Activated naive CD4-positive, alpha-beta T cell treated with anti-CD3 and anti-CD28 coated beads for 36 hours (primary cell): ENCODE measurements at regions of chr12 and their contacts with region 1.

Region 1: GRCh38 chr12:50111693-50112455 is at the start of gene COX14:
- DNase-seq: peak; percentile 100
- H3K4me3 Mint-ChIP-seq: peak within 1 kb of the TSS; percentile 89
- H3K27ac Mint-ChIP-seq: peak within 1 kb of the TSS; percentile 91
- H3K4me1 Mint-ChIP-seq: peaks cover 36% of the 10 kb centered on the region
- H3K27me3 Mint-ChIP-seq: no peaks in the 10 kb centered on the region
- total RNA-seq, gene COX14: 47.5 to 48.3 TPM

Region 2: GRCh38 chr12:49983892-49984291 is 128.0 kb before region 1 on chr12:
- CTCF ChIA-PET with region 1: no interaction called
- intact Hi-C with region 1: no loop called
- DNase-seq: no peak
- H3K4me3 Mint-ChIP-seq: no peak overlapping the region
- H3K27ac Mint-ChIP-seq: no peak overlapping the region
- H3K4me1 Mint-ChIP-seq: peaks cover 1% of the 10 kb centered on the region
- H3K27me3 Mint-ChIP-seq: no peaks in the 10 kb centered on the region

Region 3: GRCh38 chr12:50055831-50056638 is 55.8 kb before region 1 on chr12:
- CTCF ChIA-PET with region 1: interaction called, 10 read pairs
- intact Hi-C with region 1: no loop called
- DNase-seq: peak; percentile 70
- H3K4me3 Mint-ChIP-seq: peak overlapping the region; percentile 39
- H3K27ac Mint-ChIP-seq: no peak overlapping the region
- H3K4me1 Mint-ChIP-seq: peaks cover 33% of the 10 kb centered on the region
- H3K27me3 Mint-ChIP-seq: peaks cover 41% of the 10 kb centered on the region

Region 4: GRCh38 chr12:50097952-50098351 is 13.9 kb before region 1 on chr12:
- CTCF ChIA-PET with region 1: interaction called, 24 read pairs
- intact Hi-C with region 1: no loop called
- DNase-seq: no peak
- H3K4me3 Mint-ChIP-seq: no peak overlapping the region
- H3K27ac Mint-ChIP-seq: no peak overlapping the region
- H3K4me1 Mint-ChIP-seq: no peaks in the 10 kb centered on the region
- H3K27me3 Mint-ChIP-seq: no peaks in the 10 kb centered on the region

Region 5: DNA sequence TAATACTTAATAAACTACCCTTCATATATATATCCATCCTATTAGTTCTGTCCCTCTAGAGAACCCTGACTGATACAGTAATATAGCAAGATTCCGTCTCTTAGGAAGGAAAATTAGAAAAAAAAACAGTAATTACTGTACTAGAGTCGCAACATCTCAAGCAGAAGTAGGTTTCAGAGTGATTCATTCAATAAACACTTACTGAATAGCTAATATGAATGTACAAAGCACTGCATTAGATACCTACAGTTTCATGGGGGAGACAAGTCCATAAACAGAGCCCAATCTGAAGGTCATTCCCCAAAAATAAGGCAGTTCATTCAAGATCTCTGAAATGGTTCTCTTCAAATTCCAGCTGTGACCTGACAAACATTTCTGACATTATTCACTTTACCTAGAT is 45.4 kb after region 1 on chr12:
- CTCF ChIA-PET with region 1: interaction called, 13 read pairs
- intact Hi-C with region 1: no loop called
- DNase-seq: no peak
- H3K4me3 Mint-ChIP-seq: no peak overlapping the region
- H3K27ac Mint-ChIP-seq: no peak overlapping the region
- H3K4me1 Mint-ChIP-seq: peaks cover 26% of the 10 kb centered on the region
- H3K27me3 Mint-ChIP-seq: no peaks in the 10 kb centered on the region

Region 6: GRCh38 chr12:50222275-50222795 is 110.5 kb after region 1 on chr12:
- CTCF ChIA-PET with region 1: interaction called, 3 read pairs
- intact Hi-C with region 1: loop called (anchors 2 kb)
- DNase-seq: peak; percentile 32
- H3K4me3 Mint-ChIP-seq: no peak overlapping the region
- H3K27ac Mint-ChIP-seq: no peak overlapping the region
- H3K4me1 Mint-ChIP-seq: peaks cover 36% of the 10 kb centered on the region
- H3K27me3 Mint-ChIP-seq: no peaks in the 10 kb centered on the region

Region 7: GRCh38 chr12:50763639-50764285 is 651.9 kb after region 1 on chr12 and contains the start of gene ATF1:
- CTCF ChIA-PET with region 1: interaction called, 3 read pairs
- intact Hi-C with region 1: loop called (anchors 2 kb)
- DNase-seq: peak; percentile 91
- H3K4me3 Mint-ChIP-seq: peak within 1 kb of the TSS; percentile 83
- H3K27ac Mint-ChIP-seq: peak within 1 kb of the TSS; percentile 94
- H3K4me1 Mint-ChIP-seq: peaks cover 33% of the 10 kb centered on the region
- H3K27me3 Mint-ChIP-seq: no peaks in the 10 kb centered on the region
- total RNA-seq, gene ATF1: 43.3 to 48.5 TPM